ENCODE measurements at regions of chr1 and their contacts with region 1.

Region 1: GRCh38 chr1:18902523-18903290 is at the start of gene ALDH4A1:
- DNase-seq: peak; percentile 96
- ATAC-seq: peak; percentile 96
- H3K4me3 ChIP-seq: peak within 1 kb of the TSS; percentile 60 to 85 (median 80)
- H3K4me3 Mint-ChIP-seq: peak within 1 kb of the TSS; percentile 88
- H3K27ac ChIP-seq: peak within 1 kb of the TSS; percentile 85 to 89
- H3K27ac Mint-ChIP-seq: peak within 1 kb of the TSS; percentile 98
- H3K4me1 ChIP-seq: peaks cover 18 to 30% of the 10 kb centered on the region in 2 donors
- H3K4me1 Mint-ChIP-seq: peaks cover 24% of the 10 kb centered on the region
- H3K27me3 ChIP-seq: no peaks in the 10 kb centered on the region
- H3K27me3 Mint-ChIP-seq: no peaks in the 10 kb centered on the region
- CTCF ChIP-seq: no peak
- total RNA-seq, gene ALDH4A1: 3.4 and 3.9 TPM in 2 replicates

Region 2: GRCh38 chr1:18725231-18725895 is 177.3 kb before region 1 on chr1:
- CTCF ChIA-PET with region 1: no interaction called
- POLR2A ChIA-PET with region 1: no interaction called
- intact Hi-C with region 1: no loop called
- DNase-seq: no peak
- ATAC-seq: no peak
- H3K4me3 ChIP-seq: no peak overlapping the region
- H3K4me3 Mint-ChIP-seq: no peak overlapping the region
- H3K27ac ChIP-seq: no peak overlapping the region
- H3K27ac Mint-ChIP-seq: no peak overlapping the region
- H3K4me1 ChIP-seq: no peaks in the 10 kb centered on the region
- H3K4me1 Mint-ChIP-seq: no peaks in the 10 kb centered on the region
- H3K27me3 ChIP-seq: peaks cover 0 to 34% (median 6%) of the 10 kb centered on the region in 4 experiments
- H3K27me3 Mint-ChIP-seq: peaks cover 65% of the 10 kb centered on the region
- CTCF ChIP-seq: no peak

Region 3: GRCh38 chr1:18913065-18913835 is 10.5 kb after region 1 on chr1:
- CTCF ChIA-PET with region 1: interaction called, 17 read pairs
- POLR2A ChIA-PET with region 1: no interaction called
- intact Hi-C with region 1: no loop called
- DNase-seq: peak; percentile 78
- ATAC-seq: peak; percentile 88
- H3K4me3 ChIP-seq: no peak overlapping the region
- H3K4me3 Mint-ChIP-seq: no peak overlapping the region
- H3K27ac ChIP-seq: no peak overlapping the region
- H3K27ac Mint-ChIP-seq: peak overlapping the region; percentile 56
- H3K4me1 ChIP-seq: peaks cover 7 to 16% of the 10 kb centered on the region in 2 donors
- H3K4me1 Mint-ChIP-seq: peaks cover 13% of the 10 kb centered on the region
- H3K27me3 ChIP-seq: no peaks in the 10 kb centered on the region
- H3K27me3 Mint-ChIP-seq: no peaks in the 10 kb centered on the region
- CTCF ChIP-seq: peak; percentile 89

Region 4: DNA sequence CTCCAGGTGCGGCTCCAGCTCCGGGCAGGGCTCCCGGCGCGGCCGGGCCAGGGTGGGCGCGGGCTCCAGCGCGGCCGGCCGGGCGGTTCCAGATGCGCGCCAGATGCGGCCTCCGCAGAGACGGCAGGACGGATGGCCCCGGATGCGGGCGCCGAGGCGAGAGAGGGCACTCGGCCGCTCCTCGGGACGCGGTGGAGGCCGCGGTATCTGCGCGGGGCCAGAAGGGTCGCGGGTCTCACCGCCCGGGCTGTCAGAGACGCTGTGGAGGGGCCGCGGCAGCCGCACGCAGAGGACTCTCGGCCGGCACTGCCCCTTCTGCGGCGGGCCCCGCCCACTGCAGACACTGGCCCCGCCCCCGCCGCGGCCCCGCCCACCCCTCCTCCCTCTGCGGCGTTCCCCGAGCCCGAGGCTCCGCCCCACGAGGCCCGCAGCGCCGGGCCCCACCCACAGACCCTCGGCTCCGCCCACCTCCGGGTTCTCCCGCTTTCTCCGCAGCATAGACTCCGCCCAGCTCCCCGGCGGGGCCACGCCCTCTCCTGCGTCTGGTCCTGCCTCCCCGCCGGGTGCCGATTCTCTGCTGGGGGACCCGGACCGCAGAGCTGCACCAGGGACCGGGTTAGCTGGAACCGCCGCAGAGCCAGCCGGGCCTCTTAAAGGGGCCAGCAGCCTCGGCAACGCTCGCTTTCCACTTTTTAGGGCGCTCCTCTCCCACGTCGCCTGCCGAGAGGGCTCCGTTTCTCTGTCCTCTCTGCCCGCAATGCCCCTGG is 53.8 kb after region 1 on chr1 and contains the start of gene IFFO2:
- CTCF ChIA-PET with region 1: interaction called, 157 read pairs
- POLR2A ChIA-PET with region 1: interaction called, 9 read pairs
- intact Hi-C with region 1: loop called (anchors 1 kb)
- DNase-seq: peak; percentile 97
- ATAC-seq: peak; percentile 88
- H3K4me3 ChIP-seq: peak within 1 kb of the TSS; percentile 33 to 73 (median 64)
- H3K4me3 Mint-ChIP-seq: peak within 1 kb of the TSS; percentile 90
- H3K27ac ChIP-seq: peak within 1 kb of the TSS in 1 of 2 donors; percentile 13
- H3K27ac Mint-ChIP-seq: peak within 1 kb of the TSS; percentile 78
- H3K4me1 ChIP-seq: peaks cover 50 to 53% of the 10 kb centered on the region in 2 donors
- H3K4me1 Mint-ChIP-seq: peaks cover 46% of the 10 kb centered on the region
- H3K27me3 ChIP-seq: peaks cover 0 to 10% (median 4%) of the 10 kb centered on the region in 4 experiments
- H3K27me3 Mint-ChIP-seq: peaks cover 9% of the 10 kb centered on the region
- CTCF ChIP-seq: no peak
- total RNA-seq, gene IFFO2: 15.4 and 16.8 TPM in 2 replicates

Region 5: GRCh38 chr1:18972531-18972930 is 69.8 kb after region 1 on chr1:
- CTCF ChIA-PET with region 1: interaction called, 194 read pairs
- POLR2A ChIA-PET with region 1: interaction called, 7 read pairs
- intact Hi-C with region 1: loop called (anchors 1 kb)
- DNase-seq: peak; percentile 63
- ATAC-seq: peak; percentile 39
- H3K4me3 ChIP-seq: no peak overlapping the region
- H3K4me3 Mint-ChIP-seq: no peak overlapping the region
- H3K27ac ChIP-seq: no peak overlapping the region
- H3K27ac Mint-ChIP-seq: no peak overlapping the region
- H3K4me1 ChIP-seq: no peaks in the 10 kb centered on the region
- H3K4me1 Mint-ChIP-seq: no peaks in the 10 kb centered on the region
- H3K27me3 ChIP-seq: no peaks in the 10 kb centered on the region
- H3K27me3 Mint-ChIP-seq: peaks cover 18% of the 10 kb centered on the region
- CTCF ChIP-seq: peak; percentile 69

Region 6: DNA sequence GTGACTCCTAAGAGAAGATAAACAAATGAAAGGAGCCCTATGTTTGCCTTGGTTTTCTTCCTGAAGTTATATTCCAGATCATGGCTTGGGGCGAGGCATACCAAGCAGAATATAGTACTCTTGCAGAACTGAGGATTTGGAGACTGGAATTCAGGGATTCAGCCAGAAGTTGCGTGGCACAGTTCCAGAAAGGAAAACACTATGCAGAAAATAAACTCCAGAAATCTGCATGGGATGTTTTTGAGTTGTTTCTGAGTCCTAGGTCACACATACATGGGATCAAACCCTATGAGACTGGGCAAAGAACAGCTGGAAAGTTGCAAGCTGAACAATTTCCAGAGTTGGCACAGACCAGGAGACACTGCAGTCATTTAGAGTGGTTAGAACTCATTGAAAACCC is 96.7 kb after region 1 on chr1:
- CTCF ChIA-PET with region 1: no interaction called
- POLR2A ChIA-PET with region 1: no interaction called
- intact Hi-C with region 1: no loop called
- DNase-seq: no peak
- ATAC-seq: no peak
- H3K4me3 ChIP-seq: no peak overlapping the region
- H3K4me3 Mint-ChIP-seq: no peak overlapping the region
- H3K27ac ChIP-seq: no peak overlapping the region
- H3K27ac Mint-ChIP-seq: no peak overlapping the region
- H3K4me1 ChIP-seq: no peaks in the 10 kb centered on the region
- H3K4me1 Mint-ChIP-seq: no peaks in the 10 kb centered on the region
- H3K27me3 ChIP-seq: peaks cover 0 to 7% (median 0%) of the 10 kb centered on the region in 4 experiments
- H3K27me3 Mint-ChIP-seq: peaks cover 16% of the 10 kb centered on the region
- CTCF ChIP-seq: no peak

Region 7: GRCh38 chr1:19096036-19096833 is 193.5 kb after region 1 on chr1:
- CTCF ChIA-PET with region 1: interaction called, 22 read pairs
- POLR2A ChIA-PET with region 1: no interaction called
- intact Hi-C with region 1: loop called (anchors 5 kb)
- DNase-seq: no peak
- ATAC-seq: no peak
- H3K4me3 ChIP-seq: no peak overlapping the region
- H3K4me3 Mint-ChIP-seq: no peak overlapping the region
- H3K27ac ChIP-seq: no peak overlapping the region
- H3K27ac Mint-ChIP-seq: no peak overlapping the region
- H3K4me1 ChIP-seq: no peaks in the 10 kb centered on the region
- H3K4me1 Mint-ChIP-seq: no peaks in the 10 kb centered on the region
- H3K27me3 ChIP-seq: no peaks in the 10 kb centered on the region
- H3K27me3 Mint-ChIP-seq: no peaks in the 10 kb centered on the region
- CTCF ChIP-seq: no peak